H1 (cell line): ENCODE measurements at regions of chr3 and their contacts with region 1.

Region 1: GRCh38 chr3:34012102-34012461 is 213.7 kb downstream of the PDCD6IP start:
- DNase-seq: no peak
- H3K4me3 ChIP-seq: no peak overlapping the region
- H3K27ac ChIP-seq: no peak overlapping the region
- H3K4me1 ChIP-seq: peaks cover 0 to 10% (median 6%) of the 10 kb centered on the region in 4 experiments; a peak in 5 of 7 replicates
- H3K27me3 ChIP-seq: peaks cover 0 to 1% (median 0%) of the 10 kb centered on the region in 4 experiments; a peak in 1 of 7 replicates
- CTCF ChIP-seq: no peak
- EP300 ChIP-seq: no peak
- POLR2A ChIP-seq: no peak
- RAD21 ChIP-seq: no peak

Region 2: GRCh38 chr3:33810545-33810944 is 201.5 kb before region 1 on chr3:
- CTCF ChIA-PET with region 1: no interaction called
- POLR2A ChIA-PET with region 1: no interaction called
- DNase-seq: no peak
- H3K4me3 ChIP-seq: no peak overlapping the region
- H3K27ac ChIP-seq: no peak overlapping the region
- H3K4me1 ChIP-seq: peaks cover 0 to 2% (median under 1%) of the 10 kb centered on the region in 4 experiments; a peak in 3 of 7 replicates
- H3K27me3 ChIP-seq: no peaks in the 10 kb centered on the region
- CTCF ChIP-seq: no peak
- EP300 ChIP-seq: no peak
- POLR2A ChIP-seq: no peak
- RAD21 ChIP-seq: no peak

Region 3: DNA sequence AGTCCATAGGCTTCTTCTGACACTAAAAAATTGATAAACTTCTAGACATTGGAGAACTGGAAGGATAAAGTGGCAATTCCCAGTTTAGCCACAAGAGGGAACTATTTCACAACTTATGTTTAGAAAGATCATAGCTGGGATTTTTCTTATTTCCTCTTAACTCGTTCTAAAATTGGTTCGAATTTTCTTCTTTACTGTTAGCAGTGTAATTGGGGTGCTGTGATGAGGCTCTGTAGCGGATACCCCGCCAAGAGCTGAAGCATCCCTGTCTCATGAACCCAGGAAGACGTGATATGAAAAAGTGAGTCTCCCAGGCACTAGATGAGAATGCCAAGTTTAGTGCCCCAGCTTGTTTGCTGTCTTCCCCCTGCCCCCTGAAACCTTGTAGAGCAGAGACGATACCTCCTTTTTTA is 128.5 kb before region 1 on chr3:
- CTCF ChIA-PET with region 1: interaction called, 86 read pairs
- POLR2A ChIA-PET with region 1: interaction called, 3 read pairs
- DNase-seq: no peak
- H3K4me3 ChIP-seq: peak overlapping the region in 1 of 4 experiments; percentile 36; a peak in 1 of 8 replicates
- H3K27ac ChIP-seq: no peak overlapping the region
- H3K4me1 ChIP-seq: peaks cover 3 to 12% (median 6%) of the 10 kb centered on the region in 4 experiments; a peak in 5 of 7 replicates
- H3K27me3 ChIP-seq: no peaks in the 10 kb centered on the region
- CTCF ChIP-seq: peak in 2 of 3 experiments; percentile 32 to 60; a peak in 2 of 4 replicates
- EP300 ChIP-seq: no peak
- POLR2A ChIP-seq: no peak
- RAD21 ChIP-seq: peak; percentile 69 to 75

Region 4: DNA sequence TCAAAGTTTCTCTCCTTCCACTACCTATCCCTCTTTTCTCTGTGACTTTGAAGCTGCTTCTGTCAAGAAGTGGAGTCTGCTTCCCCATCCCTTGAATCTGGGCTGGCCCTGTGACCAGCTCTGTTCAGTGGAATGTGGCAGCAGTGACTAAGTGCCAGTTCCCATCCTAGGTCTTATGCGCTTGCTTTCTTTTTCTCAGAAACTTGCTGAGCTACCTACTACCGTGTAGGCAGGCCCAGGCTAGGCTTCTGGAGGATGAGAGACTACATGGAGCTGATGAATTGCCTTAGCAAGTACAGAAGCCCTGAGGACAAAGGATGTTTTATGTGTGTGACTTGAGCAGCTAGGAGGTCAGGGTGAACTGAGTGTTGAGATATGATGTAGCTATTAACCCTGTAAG is 90.5 kb before region 1 on chr3:
- CTCF ChIA-PET with region 1: interaction called, 11 read pairs
- POLR2A ChIA-PET with region 1: no interaction called
- DNase-seq: no peak
- H3K4me3 ChIP-seq: no peak overlapping the region
- H3K27ac ChIP-seq: no peak overlapping the region
- H3K4me1 ChIP-seq: peaks cover 0 to 3% (median 0%) of the 10 kb centered on the region in 4 experiments; a peak in 1 of 7 replicates
- H3K27me3 ChIP-seq: no peaks in the 10 kb centered on the region
- CTCF ChIP-seq: no peak
- EP300 ChIP-seq: no peak
- POLR2A ChIP-seq: no peak
- RAD21 ChIP-seq: no peak

Region 5: DNA sequence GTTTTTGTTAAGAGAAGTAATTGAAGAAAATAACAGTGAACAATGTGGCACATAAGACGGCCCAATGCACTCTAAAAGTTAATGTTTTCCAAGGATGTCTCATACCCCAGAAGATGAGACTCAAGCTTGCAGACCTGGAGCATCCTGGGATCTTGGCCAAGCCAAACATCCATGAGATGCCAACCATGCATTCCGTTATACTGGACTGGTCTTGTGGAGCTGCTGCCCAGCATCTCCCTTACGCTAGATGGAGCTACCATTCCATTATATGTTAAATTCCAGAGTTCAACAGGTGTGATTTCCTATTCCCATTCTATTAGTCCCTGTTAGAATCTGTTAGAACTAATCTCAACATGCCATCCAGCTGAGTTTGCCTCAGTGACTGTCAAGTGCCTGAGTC is 31.8 kb before region 1 on chr3:
- CTCF ChIA-PET with region 1: interaction called, 13 read pairs
- POLR2A ChIA-PET with region 1: no interaction called
- DNase-seq: no peak
- H3K4me3 ChIP-seq: no peak overlapping the region
- H3K27ac ChIP-seq: no peak overlapping the region
- H3K4me1 ChIP-seq: no peaks in the 10 kb centered on the region
- H3K27me3 ChIP-seq: no peaks in the 10 kb centered on the region
- CTCF ChIP-seq: peak in 2 of 3 experiments; percentile 40 to 49; a peak in 2 of 4 replicates
- EP300 ChIP-seq: no peak
- POLR2A ChIP-seq: no peak
- RAD21 ChIP-seq: peak; percentile 65 to 74

Region 6: DNA sequence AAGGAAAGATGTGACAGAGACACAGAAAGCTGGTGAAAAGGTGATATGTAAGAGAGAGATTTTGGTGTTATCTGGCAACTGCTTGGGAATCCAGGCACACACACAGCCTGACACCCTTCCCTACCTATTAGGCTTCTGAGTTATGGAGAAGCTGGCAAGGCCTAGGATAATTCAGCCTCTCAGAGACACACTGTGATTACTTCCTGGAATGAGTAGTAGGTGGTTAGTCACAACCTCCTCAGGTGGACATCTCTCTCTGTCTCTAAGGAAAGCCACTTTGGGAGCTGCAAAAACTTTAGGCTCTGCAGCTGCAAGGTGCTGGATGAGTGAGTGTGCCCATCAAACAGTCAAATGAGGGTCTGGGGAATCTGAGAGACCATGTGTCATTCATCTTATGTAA is 11.8 kb before region 1 on chr3:
- CTCF ChIA-PET with region 1: interaction called, 29 read pairs
- POLR2A ChIA-PET with region 1: no interaction called
- DNase-seq: no peak
- H3K4me3 ChIP-seq: no peak overlapping the region
- H3K27ac ChIP-seq: no peak overlapping the region
- H3K4me1 ChIP-seq: no peaks in the 10 kb centered on the region; a peak in 1 of 7 replicates
- H3K27me3 ChIP-seq: no peaks in the 10 kb centered on the region
- CTCF ChIP-seq: no peak
- EP300 ChIP-seq: no peak
- POLR2A ChIP-seq: no peak
- RAD21 ChIP-seq: no peak

Region 7: DNA sequence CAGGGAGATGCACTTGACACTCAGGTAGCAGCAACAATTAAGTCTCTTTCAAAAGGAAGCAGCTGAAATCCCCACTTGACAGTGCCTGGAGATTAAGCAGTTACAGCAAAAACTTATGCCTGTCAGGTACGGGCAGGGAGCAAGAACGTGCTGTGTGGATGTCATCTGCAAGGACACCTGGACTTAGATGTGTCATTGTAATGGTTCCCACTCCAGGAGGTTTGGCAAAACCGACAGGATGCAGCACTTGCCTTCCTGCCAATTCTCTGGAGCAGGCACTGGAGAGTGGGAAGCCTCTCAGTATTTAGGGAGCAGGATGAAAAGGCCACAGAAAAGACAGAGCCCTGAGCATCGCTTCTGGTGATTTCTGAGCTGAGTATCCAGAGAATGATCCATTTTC is 78.8 kb after region 1 on chr3:
- CTCF ChIA-PET with region 1: no interaction called
- POLR2A ChIA-PET with region 1: no interaction called
- DNase-seq: no peak
- H3K4me3 ChIP-seq: no peak overlapping the region
- H3K27ac ChIP-seq: no peak overlapping the region
- H3K4me1 ChIP-seq: no peaks in the 10 kb centered on the region
- H3K27me3 ChIP-seq: no peaks in the 10 kb centered on the region
- CTCF ChIP-seq: no peak
- EP300 ChIP-seq: no peak
- POLR2A ChIP-seq: no peak
- RAD21 ChIP-seq: no peak

Region 8: GRCh38 chr3:34312684-34313083 is 300.6 kb after region 1 on chr3:
- CTCF ChIA-PET with region 1: no interaction called
- POLR2A ChIA-PET with region 1: no interaction called
- DNase-seq: no peak
- H3K4me3 ChIP-seq: no peak overlapping the region
- H3K27ac ChIP-seq: no peak overlapping the region
- H3K4me1 ChIP-seq: no peaks in the 10 kb centered on the region
- H3K27me3 ChIP-seq: no peaks in the 10 kb centered on the region
- CTCF ChIP-seq: no peak
- EP300 ChIP-seq: no peak
- POLR2A ChIP-seq: no peak
- RAD21 ChIP-seq: no peak